ENCODE measurements at regions of chr6 and their contacts with region 1.

Region 1: DNA sequence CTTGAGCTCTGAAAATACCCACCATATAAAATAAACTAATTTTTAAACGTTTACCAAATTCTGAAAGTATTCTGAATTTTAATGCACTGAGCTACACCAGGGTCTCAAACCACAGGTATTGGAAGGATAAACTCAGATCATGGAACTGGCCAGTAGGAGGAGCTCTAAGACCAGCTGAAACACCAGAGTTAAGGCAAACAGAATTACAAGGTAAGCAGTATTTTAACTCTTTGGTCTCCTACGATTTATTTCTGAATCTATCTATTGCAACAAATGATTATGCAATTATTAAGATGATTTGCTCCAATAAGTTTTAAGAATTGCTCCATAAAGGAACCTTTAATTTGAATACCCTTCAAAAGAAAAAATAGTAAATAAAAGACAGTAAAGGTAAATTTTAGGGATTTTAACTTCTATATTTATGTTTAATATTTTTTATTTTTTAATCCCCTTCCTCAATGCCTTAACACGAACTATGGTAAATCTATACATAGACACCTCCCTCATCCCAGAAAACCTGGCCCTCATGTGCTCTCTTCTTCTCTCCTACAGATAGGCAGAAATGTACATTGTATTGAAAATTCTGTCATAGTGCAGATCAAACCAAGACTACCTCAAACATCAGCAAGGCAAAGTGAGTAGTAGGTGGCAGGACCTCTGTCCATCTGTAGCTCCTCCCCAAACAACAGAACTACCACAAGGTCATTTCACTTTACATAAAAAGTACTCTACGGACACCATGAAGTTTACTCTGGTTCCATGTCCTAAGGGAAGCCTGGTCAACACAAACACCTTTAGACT is 58.4 kb downstream of the SMLR1 start:
- H3K4me3 ChIP-seq: no peak overlapping the region
- H3K27ac ChIP-seq: no peak overlapping the region
- H3K4me1 ChIP-seq: no peaks in the 10 kb centered on the region
- CTCF ChIP-seq: peak; percentile 72

Region 2: GRCh38 chr6:130730600-130730999 is 155.0 kb before region 1 on chr6:
- CTCF ChIA-PET with region 1: no interaction called
- POLR2A ChIA-PET with region 1: no interaction called
- H3K4me3 ChIP-seq: no peak overlapping the region
- H3K27ac ChIP-seq: no peak overlapping the region
- H3K4me1 ChIP-seq: no peaks in the 10 kb centered on the region
- CTCF ChIP-seq: no peak

Region 3: DNA sequence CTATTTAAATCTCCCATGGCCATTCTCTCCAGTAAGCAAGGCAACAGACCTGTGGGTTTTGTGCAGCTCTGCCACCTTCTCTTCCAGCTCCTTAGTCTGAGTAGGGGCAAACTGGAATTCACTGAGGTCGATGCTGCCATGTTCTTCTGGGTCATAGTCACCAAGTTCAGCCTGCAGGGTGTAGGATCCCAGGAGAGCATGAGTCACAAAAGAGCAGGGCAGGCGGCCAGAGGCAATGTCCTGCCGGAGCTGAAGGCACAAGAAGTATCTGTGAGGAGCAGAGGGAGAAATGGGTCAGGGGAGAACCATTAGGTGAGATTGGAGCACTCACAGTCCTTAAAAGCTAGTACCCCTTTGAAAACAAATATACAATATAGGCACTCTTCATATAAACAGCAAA is 15.3 kb after region 1 on chr6:
- CTCF ChIA-PET with region 1: interaction called, 13 read pairs
- POLR2A ChIA-PET with region 1: no interaction called
- H3K4me3 ChIP-seq: no peak overlapping the region
- H3K27ac ChIP-seq: no peak overlapping the region
- H3K4me1 ChIP-seq: no peaks in the 10 kb centered on the region
- CTCF ChIP-seq: no peak

Region 4: DNA sequence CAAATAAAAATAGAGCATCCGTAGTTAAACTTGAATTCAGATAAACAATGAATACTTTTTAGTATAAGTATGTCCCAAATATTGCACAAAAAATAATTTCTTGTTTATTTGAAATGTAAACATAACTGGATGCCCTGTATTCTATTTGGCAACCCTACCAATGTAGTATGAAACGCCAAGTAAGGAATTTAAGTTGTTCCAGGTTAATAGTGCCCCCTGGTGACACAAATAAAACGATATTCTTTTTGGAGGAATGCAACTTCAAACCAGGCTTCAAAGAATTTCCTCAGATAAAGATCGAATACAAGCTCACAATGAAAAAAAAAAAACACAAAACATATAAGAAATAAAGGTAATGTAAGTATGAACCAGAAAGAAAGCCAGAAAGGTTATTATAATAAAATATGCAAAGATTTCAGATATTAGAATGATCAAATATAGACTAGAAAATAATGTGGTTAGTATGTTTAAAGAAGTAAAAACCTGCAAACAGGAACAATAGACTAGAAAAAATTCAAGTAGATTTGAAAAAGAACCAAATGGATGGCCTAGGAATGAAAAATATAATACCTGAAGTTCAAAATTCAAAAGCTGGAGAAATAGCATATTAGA is 231.3 kb after region 1 on chr6:
- CTCF ChIA-PET with region 1: interaction called, 175 read pairs
- POLR2A ChIA-PET with region 1: interaction called, 8 read pairs
- H3K4me3 ChIP-seq: no peak overlapping the region
- H3K27ac ChIP-seq: no peak overlapping the region
- H3K4me1 ChIP-seq: no peaks in the 10 kb centered on the region
- CTCF ChIP-seq: no peak

Region 5: DNA sequence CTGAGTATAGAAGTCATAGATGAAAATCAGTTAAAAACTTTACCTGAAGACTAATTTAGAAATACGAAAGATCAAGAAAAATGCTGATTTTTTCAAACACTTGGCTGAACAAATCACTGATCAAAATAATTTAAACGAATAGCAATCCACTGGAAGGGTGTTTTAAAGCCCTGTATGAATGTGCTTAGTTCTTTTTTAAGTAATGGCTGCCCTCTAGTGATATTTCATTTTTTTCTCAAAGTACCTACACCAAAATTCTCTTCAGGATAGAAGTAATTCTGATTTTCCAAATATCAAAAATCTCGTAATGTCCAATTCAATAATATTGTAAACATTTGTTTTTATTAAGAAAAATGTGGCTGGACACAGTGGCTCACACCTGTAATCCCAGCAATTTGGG is 282.2 kb after region 1 on chr6:
- CTCF ChIA-PET with region 1: interaction called, 23 read pairs
- POLR2A ChIA-PET with region 1: no interaction called
- H3K4me3 ChIP-seq: no peak overlapping the region
- H3K27ac ChIP-seq: no peak overlapping the region
- H3K4me1 ChIP-seq: peaks cover 4% of the 10 kb centered on the region; the same call in 1 of the 2 replicates
- CTCF ChIP-seq: no peak

Region 6: DNA sequence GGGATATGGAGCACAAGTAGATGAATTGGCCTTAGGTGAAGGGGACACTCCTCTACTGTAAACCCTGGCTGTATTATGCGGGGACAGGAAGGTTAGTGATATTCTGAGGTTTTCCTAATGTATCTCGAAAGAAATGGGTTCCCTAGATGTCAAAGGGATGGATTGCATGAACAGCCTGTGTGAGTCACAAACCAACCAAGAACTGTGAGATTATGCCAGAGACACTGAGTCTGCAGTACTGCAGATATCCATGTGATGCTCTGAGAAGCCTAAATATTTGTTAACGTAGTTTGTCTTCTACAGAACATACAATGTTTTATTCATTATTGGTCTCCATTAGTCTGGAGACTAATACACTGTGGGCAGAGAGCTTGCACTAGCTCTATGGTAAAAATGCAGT is 431.9 kb after region 1 on chr6:
- CTCF ChIA-PET with region 1: no interaction called
- POLR2A ChIA-PET with region 1: no interaction called
- H3K4me3 ChIP-seq: no peak overlapping the region
- H3K27ac ChIP-seq: no peak overlapping the region
- H3K4me1 ChIP-seq: no peaks in the 10 kb centered on the region
- CTCF ChIP-seq: no peak

Region 7: DNA sequence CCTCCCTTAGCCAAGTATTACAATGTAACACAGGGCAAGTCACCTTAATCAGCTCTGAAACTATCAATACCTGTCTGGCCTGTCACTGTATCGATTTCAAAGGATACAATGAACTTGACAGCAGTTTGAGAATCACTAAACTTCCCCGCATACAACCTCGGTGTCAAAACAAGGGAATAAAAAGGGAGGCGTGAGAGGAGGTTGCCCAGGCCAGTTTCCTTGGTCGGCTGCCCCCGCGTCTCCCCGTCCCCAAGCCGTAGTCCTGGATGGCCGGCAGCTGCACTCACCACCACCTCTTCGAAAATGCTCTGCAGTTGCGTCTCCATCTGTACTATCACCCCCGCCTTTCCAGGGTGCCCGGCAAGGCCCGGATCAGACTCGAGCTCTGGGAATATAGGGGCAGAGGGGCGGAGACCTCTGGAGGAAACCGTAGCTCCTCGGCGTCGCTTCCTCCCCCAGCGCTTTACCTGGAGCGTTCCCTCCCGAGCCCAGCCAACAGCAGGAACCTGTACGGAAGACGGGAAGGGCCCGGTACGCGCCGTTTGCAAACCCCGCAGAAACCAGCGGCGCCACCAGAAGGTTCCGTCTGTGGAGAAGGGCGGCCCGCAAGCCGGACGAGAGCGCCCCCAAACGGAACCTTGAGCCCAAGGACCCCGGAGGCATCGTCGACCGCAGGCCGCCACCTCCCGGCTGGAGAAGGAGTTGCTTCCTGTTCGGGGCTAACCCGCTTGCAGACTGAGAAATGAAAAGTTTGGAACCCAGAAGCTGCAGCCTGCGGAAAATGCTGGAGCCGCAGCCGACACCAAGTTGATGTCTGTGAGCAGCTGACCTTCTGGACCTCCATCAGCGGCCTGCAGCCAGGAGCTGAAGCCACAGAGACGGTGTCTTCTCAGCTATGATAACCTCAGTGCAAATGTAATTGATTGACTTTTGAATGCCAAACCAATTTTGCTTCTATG is 742.4 kb after region 1 on chr6 and contains the start of gene MED23:
- CTCF ChIA-PET with region 1: interaction called, 12 read pairs
- POLR2A ChIA-PET with region 1: no interaction called
- H3K4me3 ChIP-seq: peak within 1 kb of the TSS; percentile 74
- H3K27ac ChIP-seq: peak within 1 kb of the TSS; percentile 75
- H3K4me1 ChIP-seq: 0 out of 2 replicates have a peak, but pooled peaks cover 4% of the 10 kb centered on the region
- CTCF ChIP-seq: peak; percentile 100

Measured in HEK293 (cell line).